ENCODE measurements at regions of chr9 and their contacts with region 1.

Region 1: GRCh38 chr9:97411789-97412625 is at the start of gene TDRD7:
- DNase-seq: peak; percentile 94
- ATAC-seq: peak; percentile 90
- H3K4me3 Mint-ChIP-seq: peak within 1 kb of the TSS; percentile 87
- H3K27ac Mint-ChIP-seq: peak within 1 kb of the TSS; percentile 78
- H3K4me1 Mint-ChIP-seq: peaks cover 38% of the 10 kb centered on the region
- H3K27me3 Mint-ChIP-seq: peaks cover 5% of the 10 kb centered on the region
- CTCF ChIP-seq: peak; percentile 43
- total RNA-seq, gene TDRD7: 13.7 and 14.7 TPM in 2 replicates

Region 2: GRCh38 chr9:96686548-96687335 is 725.3 kb before region 1 on chr9:
- CTCF ChIA-PET with region 1: no interaction called
- POLR2A ChIA-PET with region 1: no interaction called
- intact Hi-C with region 1: loop called (anchors 5 kb)
- DNase-seq: peak; percentile 78
- ATAC-seq: peak; percentile 97
- H3K4me3 Mint-ChIP-seq: peak overlapping the region; percentile 89
- H3K27ac Mint-ChIP-seq: peak overlapping the region; percentile 79
- H3K4me1 Mint-ChIP-seq: peaks cover 10% of the 10 kb centered on the region
- H3K27me3 Mint-ChIP-seq: no peaks in the 10 kb centered on the region
- CTCF ChIP-seq: no peak

Region 3: GRCh38 chr9:96854073-96854876 is 557.7 kb before region 1 on chr9 and contains the start of gene ZNF782:
- CTCF ChIA-PET with region 1: interaction called, 8 read pairs
- POLR2A ChIA-PET with region 1: no interaction called
- intact Hi-C with region 1: loop called (anchors 1 kb)
- DNase-seq: peak; percentile 83
- ATAC-seq: peak; percentile 95
- H3K4me3 Mint-ChIP-seq: peak within 1 kb of the TSS; percentile 100
- H3K27ac Mint-ChIP-seq: peak within 1 kb of the TSS; percentile 98
- H3K4me1 Mint-ChIP-seq: peaks cover 40% of the 10 kb centered on the region
- H3K27me3 Mint-ChIP-seq: peaks cover 9% of the 10 kb centered on the region
- CTCF ChIP-seq: no peak
- total RNA-seq, gene ZNF782: 7.7 and 8.0 TPM in 2 replicates

Region 4: GRCh38 chr9:97386733-97387503 is 25.1 kb before region 1 on chr9:
- CTCF ChIA-PET with region 1: interaction called, 10 read pairs
- POLR2A ChIA-PET with region 1: no interaction called
- intact Hi-C with region 1: no loop called
- DNase-seq: peak; percentile 76
- ATAC-seq: peak; percentile 53
- H3K4me3 Mint-ChIP-seq: no peak overlapping the region
- H3K27ac Mint-ChIP-seq: no peak overlapping the region
- H3K4me1 Mint-ChIP-seq: peaks cover 23% of the 10 kb centered on the region
- H3K27me3 Mint-ChIP-seq: peaks cover 4% of the 10 kb centered on the region
- CTCF ChIP-seq: peak; percentile 52

Region 5: DNA sequence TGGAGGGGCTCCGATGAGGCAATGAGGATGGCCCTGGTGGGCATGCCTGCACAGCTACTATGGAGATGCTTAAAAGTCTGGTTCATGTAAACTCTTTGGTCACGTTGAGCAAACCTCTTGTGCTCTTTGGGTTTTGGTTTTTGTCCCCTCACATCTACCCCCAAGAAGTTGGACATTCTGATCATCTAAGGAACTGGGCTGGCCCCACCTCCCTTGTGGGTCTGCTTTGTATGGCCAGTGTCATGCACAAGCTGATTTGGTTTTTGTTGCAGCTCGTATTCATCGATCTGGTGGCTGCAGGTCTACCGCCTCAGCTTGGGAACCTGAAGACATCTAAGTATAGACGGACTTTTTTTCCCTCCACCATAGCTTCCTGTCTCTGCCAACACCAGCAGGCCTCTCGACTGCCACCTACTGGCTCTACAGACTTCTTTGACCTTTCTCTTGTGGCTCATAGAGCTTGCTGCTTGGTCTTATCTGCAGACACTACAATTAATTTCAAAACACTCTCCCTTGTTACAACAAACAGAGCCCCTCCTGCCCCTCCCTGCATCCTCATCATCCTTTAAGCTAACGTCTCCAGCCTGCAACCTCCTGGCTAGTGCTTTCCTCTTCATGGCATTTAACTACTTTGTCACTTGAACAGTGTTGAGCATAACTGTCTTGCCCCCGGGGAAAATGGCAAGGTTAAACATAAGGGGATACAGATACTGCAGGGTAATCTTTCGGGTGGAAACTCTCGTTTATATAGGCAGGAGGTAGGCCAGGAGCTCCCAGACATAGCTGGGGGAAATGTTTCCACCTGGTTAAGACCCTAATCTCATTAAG is 186.7 kb after region 1 on chr9:
- CTCF ChIA-PET with region 1: interaction called, 29 read pairs
- POLR2A ChIA-PET with region 1: interaction called, 4 read pairs
- intact Hi-C with region 1: loop called (anchors 1 kb)
- DNase-seq: no peak
- ATAC-seq: peak; percentile 98
- H3K4me3 Mint-ChIP-seq: peak overlapping the region; percentile 46
- H3K27ac Mint-ChIP-seq: peak overlapping the region; percentile 31
- H3K4me1 Mint-ChIP-seq: peaks cover 7% of the 10 kb centered on the region
- H3K27me3 Mint-ChIP-seq: no peaks in the 10 kb centered on the region
- CTCF ChIP-seq: no peak

Region 6: GRCh38 chr9:97982683-97983588 is 570.9 kb after region 1 on chr9 and contains the start of gene ANP32B:
- CTCF ChIA-PET with region 1: no interaction called
- POLR2A ChIA-PET with region 1: interaction called, 3 read pairs
- intact Hi-C with region 1: loop called (anchors 5 kb)
- DNase-seq: peak; percentile 95
- ATAC-seq: peak; percentile 80
- H3K4me3 Mint-ChIP-seq: peak within 1 kb of the TSS; percentile 86
- H3K27ac Mint-ChIP-seq: peak within 1 kb of the TSS; percentile 92
- H3K4me1 Mint-ChIP-seq: peaks cover 38% of the 10 kb centered on the region
- H3K27me3 Mint-ChIP-seq: no peaks in the 10 kb centered on the region
- CTCF ChIP-seq: no peak
- total RNA-seq, gene ANP32B: 162 and 173 TPM in 2 replicates

Region 7: DNA sequence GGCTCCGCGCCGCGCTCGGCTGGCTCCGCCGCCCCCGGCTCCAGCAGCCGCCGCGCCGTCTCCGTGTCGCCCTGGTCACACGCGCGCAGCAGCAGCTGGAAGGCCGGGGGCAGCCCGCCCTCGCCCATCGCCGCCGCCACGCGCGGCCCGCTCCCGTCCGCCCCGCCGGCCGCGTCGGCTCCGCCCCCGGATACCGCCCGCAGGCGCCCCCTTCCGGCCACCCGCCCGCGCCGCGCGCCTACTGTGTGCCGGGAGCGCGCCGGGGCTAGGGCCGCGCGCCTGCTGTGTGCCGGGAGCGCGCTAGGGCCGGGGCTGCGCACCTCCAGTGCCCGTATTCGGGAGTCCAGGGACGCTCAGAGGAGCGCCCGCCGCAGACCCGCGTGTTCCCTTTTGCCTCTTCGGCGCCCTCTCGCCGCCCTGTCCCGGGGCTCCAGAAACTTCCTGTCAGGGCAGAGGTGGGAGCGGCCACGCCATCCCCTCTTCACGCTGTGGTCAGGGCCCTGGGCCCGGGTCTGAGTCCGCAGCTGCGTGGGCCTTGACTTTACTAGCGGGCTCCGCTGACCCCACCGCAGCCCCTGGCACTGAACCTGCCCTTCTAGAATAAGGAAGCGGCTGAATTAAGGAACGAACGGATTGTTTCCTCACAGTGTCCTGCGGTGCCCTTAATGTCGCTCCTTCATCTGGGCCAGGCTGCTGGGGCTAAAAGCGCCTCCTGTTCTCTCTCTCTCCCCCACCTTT is 1384.5 kb after region 1 on chr9 and contains the start of gene ANKS6:
- CTCF ChIA-PET with region 1: no interaction called
- POLR2A ChIA-PET with region 1: no interaction called
- intact Hi-C with region 1: loop called (anchors 5 kb)
- DNase-seq: peak; percentile 91
- ATAC-seq: peak; percentile 94
- H3K4me3 Mint-ChIP-seq: peak within 1 kb of the TSS; percentile 87
- H3K27ac Mint-ChIP-seq: peak within 1 kb of the TSS; percentile 47
- H3K4me1 Mint-ChIP-seq: peaks cover 16% of the 10 kb centered on the region
- H3K27me3 Mint-ChIP-seq: peaks cover 1% of the 10 kb centered on the region
- CTCF ChIP-seq: no peak
- total RNA-seq, gene ANKS6: 12.1 and 14.8 TPM in 2 replicates